AG04450 (cell line): ENCODE measurements at regions of chr12 and their contacts with region 1.

Region 1: GRCh38 chr12:90978117-90978770 is 23.3 kb upstream of the CCER1 start:
- DNase-seq: peak; percentile 56
- H3K4me3 ChIP-seq: no peak overlapping the region
- H3K27ac ChIP-seq: no peak overlapping the region
- H3K27me3 ChIP-seq: no peaks in the 10 kb centered on the region
- CTCF ChIP-seq: peak; percentile 79

Region 2: DNA sequence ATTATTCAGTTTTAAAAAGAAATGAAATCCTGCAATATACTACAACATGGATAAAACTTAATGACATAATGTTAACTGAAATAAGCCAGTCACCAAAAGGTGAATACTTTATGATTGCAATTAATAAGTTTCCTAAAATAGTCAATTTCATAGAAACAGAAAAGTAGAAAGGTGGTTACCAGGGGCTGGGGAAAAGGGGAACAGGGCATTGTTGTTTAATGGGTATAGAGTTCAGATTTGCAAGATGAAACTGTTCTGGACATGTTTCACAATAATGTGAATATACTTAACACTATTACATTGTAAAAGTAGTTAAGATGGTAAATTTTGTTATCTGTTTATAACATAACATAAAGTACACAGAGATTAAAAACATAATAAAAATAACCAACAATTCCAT is 574.2 kb before region 1 on chr12:
- CTCF ChIA-PET with region 1: no interaction called
- POLR2A ChIA-PET with region 1: no interaction called
- DNase-seq: no peak
- H3K4me3 ChIP-seq: no peak overlapping the region
- H3K27ac ChIP-seq: no peak overlapping the region
- H3K27me3 ChIP-seq: no peaks in the 10 kb centered on the region
- CTCF ChIP-seq: no peak

Region 3: GRCh38 chr12:90801776-90802175 is 176.5 kb before region 1 on chr12:
- CTCF ChIA-PET with region 1: no interaction called
- POLR2A ChIA-PET with region 1: no interaction called
- DNase-seq: peak; percentile 2
- H3K4me3 ChIP-seq: no peak overlapping the region
- H3K27ac ChIP-seq: no peak overlapping the region
- H3K27me3 ChIP-seq: no peaks in the 10 kb centered on the region
- CTCF ChIP-seq: no peak

Region 4: GRCh38 chr12:91058786-91059185 is 80.5 kb after region 1 on chr12:
- CTCF ChIA-PET with region 1: no interaction called
- POLR2A ChIA-PET with region 1: no interaction called
- DNase-seq: no peak
- H3K4me3 ChIP-seq: no peak overlapping the region
- H3K27ac ChIP-seq: no peak overlapping the region
- H3K27me3 ChIP-seq: no peaks in the 10 kb centered on the region
- CTCF ChIP-seq: no peak

Region 5: GRCh38 chr12:91109148-91109564 is 130.9 kb after region 1 on chr12:
- CTCF ChIA-PET with region 1: interaction called, 43 read pairs
- POLR2A ChIA-PET with region 1: no interaction called
- DNase-seq: no peak
- H3K4me3 ChIP-seq: peak overlapping the region; percentile 56
- H3K27ac ChIP-seq: no peak overlapping the region
- H3K27me3 ChIP-seq: no peaks in the 10 kb centered on the region
- CTCF ChIP-seq: peak; percentile 71

Region 6: GRCh38 chr12:91161009-91161408 is 182.8 kb after region 1 on chr12:
- CTCF ChIA-PET with region 1: interaction called, 10 read pairs
- POLR2A ChIA-PET with region 1: no interaction called
- DNase-seq: no peak
- H3K4me3 ChIP-seq: no peak overlapping the region
- H3K27ac ChIP-seq: no peak overlapping the region
- H3K27me3 ChIP-seq: no peaks in the 10 kb centered on the region
- CTCF ChIP-seq: no peak

Region 7: DNA sequence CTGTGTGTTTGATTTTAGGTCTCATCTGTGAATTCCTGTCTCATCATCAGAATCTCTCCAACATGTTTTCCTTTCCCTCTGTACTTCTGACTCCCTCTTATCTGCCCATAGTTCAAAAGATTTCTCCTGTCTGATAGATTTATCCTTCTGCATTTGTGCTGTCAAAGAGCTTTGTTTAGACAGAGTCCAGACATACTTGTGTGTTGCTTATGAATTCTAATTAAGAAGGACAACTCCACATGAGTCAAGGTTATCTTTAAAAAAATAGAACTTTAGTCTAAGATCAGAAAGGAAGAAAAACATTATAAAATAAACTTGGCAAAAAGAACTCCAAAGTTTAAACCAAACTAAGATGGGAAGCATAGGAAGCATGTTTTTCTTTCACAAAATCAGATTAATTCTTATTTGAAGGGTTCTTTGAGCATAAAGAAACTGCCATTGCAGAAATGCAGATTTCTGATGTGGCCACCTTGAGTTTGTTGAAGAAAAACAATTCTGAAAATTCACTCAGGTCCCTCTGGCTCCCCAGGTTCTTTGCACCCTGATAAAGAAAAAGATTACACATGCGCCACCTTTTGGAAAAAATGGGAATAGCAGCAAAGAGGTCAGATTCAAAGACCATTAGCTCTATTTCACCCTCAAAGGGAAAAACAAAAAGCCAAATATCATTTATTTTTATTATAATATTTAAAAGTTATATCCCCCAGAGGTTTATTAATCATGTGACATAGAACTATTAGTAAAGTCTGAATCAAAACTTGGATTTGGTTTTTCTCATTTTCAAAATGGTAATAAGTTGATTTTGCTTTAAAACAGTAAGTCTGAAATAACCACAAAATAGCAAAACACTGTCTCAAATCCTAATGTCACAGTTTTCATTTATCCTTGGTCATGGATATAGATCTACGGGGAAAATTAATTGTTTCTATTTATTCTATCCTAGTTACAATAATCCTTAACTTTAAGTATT is 348.1 kb after region 1 on chr12:
- CTCF ChIA-PET with region 1: interaction called, 36 read pairs
- POLR2A ChIA-PET with region 1: no interaction called
- DNase-seq: peak; percentile 55
- H3K4me3 ChIP-seq: no peak overlapping the region; the same call in 1 of the 2 replicates
- H3K27ac ChIP-seq: no peak overlapping the region
- H3K27me3 ChIP-seq: no peaks in the 10 kb centered on the region
- CTCF ChIP-seq: peak; percentile 91

Region 8: GRCh38 chr12:91349476-91349875 is 371.2 kb after region 1 on chr12:
- CTCF ChIA-PET with region 1: interaction called, 97 read pairs
- POLR2A ChIA-PET with region 1: no interaction called
- DNase-seq: no peak
- H3K4me3 ChIP-seq: no peak overlapping the region
- H3K27ac ChIP-seq: no peak overlapping the region
- H3K27me3 ChIP-seq: no peaks in the 10 kb centered on the region
- CTCF ChIP-seq: no peak

Region 9: GRCh38 chr12:91361864-91362263 is 383.6 kb after region 1 on chr12:
- CTCF ChIA-PET with region 1: interaction called, 97 read pairs
- POLR2A ChIA-PET with region 1: no interaction called
- DNase-seq: no peak
- H3K4me3 ChIP-seq: no peak overlapping the region
- H3K27ac ChIP-seq: no peak overlapping the region
- H3K27me3 ChIP-seq: no peaks in the 10 kb centered on the region
- CTCF ChIP-seq: peak; percentile 65